Activated naive CD4-positive, alpha-beta T cell treated with anti-CD3 and anti-CD28 coated beads, Interleukin-2, amount 10 ng/mL, durations not matched to agents 7 days and 5 days (primary cell): ENCODE measurements at regions of chr7 and their contacts with region 1.

Region 1: GRCh38 chr7:143240291-143241168 is 18.7 kb downstream of the TAS2R40 start:
- DNase-seq: peak; percentile 82
- H3K4me3 Mint-ChIP-seq: no peak overlapping the region
- H3K27ac Mint-ChIP-seq: peak overlapping the region; percentile 1
- H3K4me1 Mint-ChIP-seq: peaks cover 53% of the 10 kb centered on the region
- H3K27me3 Mint-ChIP-seq: peaks cover 14% of the 10 kb centered on the region

Region 2: GRCh38 chr7:143049362-143049761 is 191.2 kb before region 1 on chr7:
- CTCF ChIA-PET with region 1: no interaction called
- DNase-seq: no peak
- H3K4me3 Mint-ChIP-seq: no peak overlapping the region
- H3K27ac Mint-ChIP-seq: no peak overlapping the region
- H3K4me1 Mint-ChIP-seq: no peaks in the 10 kb centered on the region
- H3K27me3 Mint-ChIP-seq: peaks cover 8% of the 10 kb centered on the region

Region 3: GRCh38 chr7:143263266-143264195 is 23.0 kb after region 1 on chr7 and contains the start of gene GSTK1:
- CTCF ChIA-PET with region 1: interaction called, 54 read pairs
- DNase-seq: peak; percentile 89
- H3K4me3 Mint-ChIP-seq: peak within 1 kb of the TSS; percentile 87
- H3K27ac Mint-ChIP-seq: peak within 1 kb of the TSS; percentile 93
- H3K4me1 Mint-ChIP-seq: peaks cover 85% of the 10 kb centered on the region
- H3K27me3 Mint-ChIP-seq: no peaks in the 10 kb centered on the region

Region 4: DNA sequence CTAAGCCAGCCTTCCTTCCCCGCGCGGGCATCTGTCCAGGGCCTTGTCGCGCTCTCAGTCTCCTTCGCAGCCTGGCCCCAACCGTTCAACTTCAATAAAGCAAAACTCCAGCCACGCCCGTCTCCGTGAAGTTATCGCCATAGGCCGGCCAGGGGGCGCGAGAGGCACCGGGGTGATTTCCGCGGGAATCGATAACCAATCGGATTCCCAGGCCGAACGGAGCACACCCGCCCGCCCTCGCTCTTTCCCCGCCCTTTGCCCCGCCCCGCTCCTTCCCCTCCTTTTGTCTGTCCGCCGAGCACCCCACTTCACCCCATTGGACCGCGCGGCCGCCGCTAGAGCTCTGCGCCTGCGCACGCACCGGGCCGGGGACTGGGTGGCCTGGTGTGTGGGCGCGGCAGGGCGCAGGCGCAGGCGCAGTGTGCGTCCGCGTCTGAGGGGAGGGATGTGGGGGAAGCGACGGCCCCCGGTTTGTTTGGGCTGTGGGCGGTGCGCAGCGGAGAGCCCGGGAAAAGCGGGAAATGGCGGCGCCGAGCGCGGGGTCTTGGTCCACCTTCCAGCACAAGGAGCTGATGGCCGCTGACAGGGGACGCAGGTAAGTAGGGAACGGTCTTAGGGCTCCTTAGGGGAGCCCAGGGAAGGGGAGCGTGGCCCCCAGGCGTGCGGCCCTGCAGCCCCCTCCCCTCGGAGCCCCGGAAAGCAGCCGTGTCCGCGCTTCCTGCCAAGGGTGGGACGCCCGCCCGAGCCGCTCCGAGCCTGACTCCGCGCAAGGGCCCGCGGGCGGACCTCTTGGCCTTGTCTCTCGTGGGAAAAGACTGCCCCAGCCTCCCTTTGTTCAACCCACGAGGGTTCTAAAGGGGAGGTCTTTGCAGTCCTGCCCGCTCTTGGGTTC is 47.7 kb after region 1 on chr7 and contains the start of gene CASP2:
- CTCF ChIA-PET with region 1: interaction called, 49 read pairs
- DNase-seq: peak; percentile 99
- H3K4me3 Mint-ChIP-seq: peak within 1 kb of the TSS; percentile 97
- H3K27ac Mint-ChIP-seq: peak within 1 kb of the TSS; percentile 93
- H3K4me1 Mint-ChIP-seq: peaks cover 71% of the 10 kb centered on the region
- H3K27me3 Mint-ChIP-seq: peaks cover 4% of the 10 kb centered on the region

Region 5: GRCh38 chr7:143305423-143306070 is 65.0 kb after region 1 on chr7:
- CTCF ChIA-PET with region 1: interaction called, 185 read pairs
- DNase-seq: peak; percentile 76
- H3K4me3 Mint-ChIP-seq: no peak overlapping the region
- H3K27ac Mint-ChIP-seq: peak overlapping the region; percentile 15
- H3K4me1 Mint-ChIP-seq: peaks cover 76% of the 10 kb centered on the region
- H3K27me3 Mint-ChIP-seq: no peaks in the 10 kb centered on the region

Region 6: GRCh38 chr7:143372070-143372469 is 131.5 kb after region 1 on chr7:
- CTCF ChIA-PET with region 1: interaction called, 10 read pairs
- DNase-seq: peak; percentile 51
- H3K4me3 Mint-ChIP-seq: no peak overlapping the region
- H3K27ac Mint-ChIP-seq: peak overlapping the region; percentile 60
- H3K4me1 Mint-ChIP-seq: peaks cover 46% of the 10 kb centered on the region
- H3K27me3 Mint-ChIP-seq: peaks cover 22% of the 10 kb centered on the region

Region 7: GRCh38 chr7:143416565-143417149 is 176.1 kb after region 1 on chr7:
- CTCF ChIA-PET with region 1: interaction called, 77 read pairs
- DNase-seq: no peak
- H3K4me3 Mint-ChIP-seq: no peak overlapping the region
- H3K27ac Mint-ChIP-seq: no peak overlapping the region
- H3K4me1 Mint-ChIP-seq: peaks cover 5% of the 10 kb centered on the region
- H3K27me3 Mint-ChIP-seq: no peaks in the 10 kb centered on the region